ENCODE measurements at regions of chr1 and their contacts with region 1.

Region 1: DNA sequence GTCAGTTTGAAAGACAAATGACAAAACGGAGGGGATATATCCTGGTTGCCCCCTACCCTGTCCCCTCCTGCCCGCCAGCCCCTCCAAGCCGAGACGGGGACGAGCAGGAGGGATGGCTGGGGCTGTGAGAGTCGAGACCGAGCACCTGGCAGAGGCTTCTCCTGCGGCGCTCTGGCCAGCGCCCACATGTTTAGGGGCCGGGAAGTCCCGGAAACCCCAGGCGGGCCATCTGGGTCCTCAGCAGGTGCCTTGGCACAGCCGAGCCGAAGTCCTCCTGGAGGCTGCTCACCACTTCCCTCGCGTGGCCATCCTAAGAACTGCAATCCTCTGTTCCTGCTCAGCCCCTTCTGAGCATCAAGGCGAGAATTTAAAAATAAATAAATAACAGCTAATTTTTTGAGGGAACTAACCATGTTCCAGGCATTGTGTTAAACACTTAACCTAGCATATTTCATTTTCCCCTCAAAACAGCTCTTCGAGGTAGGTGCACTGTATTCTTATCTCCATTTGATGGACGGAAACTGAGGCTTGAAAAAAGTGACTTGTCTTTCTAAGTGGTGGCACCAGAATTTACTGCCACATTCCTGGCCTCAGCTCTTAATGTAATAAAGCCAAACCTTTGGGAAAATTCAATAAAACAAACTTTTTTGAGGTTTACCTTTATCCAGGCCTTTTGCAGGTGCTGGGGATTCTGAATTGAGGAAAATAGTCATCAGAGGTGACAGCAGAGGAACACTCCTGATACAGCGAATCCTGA is 3.5 kb upstream of the RIMS3 start:
- DNase-seq: peak; percentile 82
- ATAC-seq: peak; percentile 74
- H3K4me3 Mint-ChIP-seq: peak overlapping the region; percentile 75
- H3K27ac Mint-ChIP-seq: peak overlapping the region; percentile 41
- H3K4me1 Mint-ChIP-seq: peaks cover 31% of the 10 kb centered on the region
- H3K27me3 Mint-ChIP-seq: no peaks in the 10 kb centered on the region
- CTCF ChIP-seq: peak; percentile 76

Region 2: GRCh38 chr1:40161125-40161887 is 507.6 kb before region 1 on chr1 and contains the start of gene RLF:
- CTCF ChIA-PET with region 1: no interaction called
- POLR2A ChIA-PET with region 1: no interaction called
- intact Hi-C with region 1: loop called (anchors 5 kb)
- DNase-seq: peak; percentile 94
- ATAC-seq: peak; percentile 96
- H3K4me3 Mint-ChIP-seq: no peak within 1 kb of the TSS
- H3K27ac Mint-ChIP-seq: no peak within 1 kb of the TSS
- H3K4me1 Mint-ChIP-seq: peaks cover 22% of the 10 kb centered on the region
- H3K27me3 Mint-ChIP-seq: no peaks in the 10 kb centered on the region
- CTCF ChIP-seq: no peak
- total RNA-seq, gene RLF: 18.1 and 19.2 TPM in 2 replicates

Region 3: GRCh38 chr1:40612345-40612831 is 56.6 kb before region 1 on chr1:
- CTCF ChIA-PET with region 1: interaction called, 5 read pairs
- POLR2A ChIA-PET with region 1: no interaction called
- intact Hi-C with region 1: loop called (anchors 1 kb)
- DNase-seq: peak; percentile 27
- ATAC-seq: peak; percentile 96
- H3K4me3 Mint-ChIP-seq: no peak overlapping the region
- H3K27ac Mint-ChIP-seq: no peak overlapping the region
- H3K4me1 Mint-ChIP-seq: no peaks in the 10 kb centered on the region
- H3K27me3 Mint-ChIP-seq: peaks cover 2% of the 10 kb centered on the region
- CTCF ChIP-seq: peak; percentile 52

Region 4: GRCh38 chr1:40630488-40631381 is 38.2 kb before region 1 on chr1:
- CTCF ChIA-PET with region 1: interaction called, 6 read pairs
- POLR2A ChIA-PET with region 1: no interaction called
- intact Hi-C with region 1: loop called (anchors 1 kb)
- DNase-seq: no peak
- ATAC-seq: peak; percentile 62
- H3K4me3 Mint-ChIP-seq: no peak overlapping the region
- H3K27ac Mint-ChIP-seq: no peak overlapping the region
- H3K4me1 Mint-ChIP-seq: peaks cover 22% of the 10 kb centered on the region
- H3K27me3 Mint-ChIP-seq: no peaks in the 10 kb centered on the region
- CTCF ChIP-seq: no peak

Region 5: GRCh38 chr1:40849801-40850592 is 181.1 kb after region 1 on chr1:
- CTCF ChIA-PET with region 1: interaction called, 4 read pairs
- POLR2A ChIA-PET with region 1: no interaction called
- intact Hi-C with region 1: loop called (anchors 1 kb)
- DNase-seq: peak; percentile 67
- ATAC-seq: peak; percentile 97
- H3K4me3 Mint-ChIP-seq: no peak overlapping the region
- H3K27ac Mint-ChIP-seq: no peak overlapping the region
- H3K4me1 Mint-ChIP-seq: peaks cover 10% of the 10 kb centered on the region
- H3K27me3 Mint-ChIP-seq: no peaks in the 10 kb centered on the region
- CTCF ChIP-seq: peak; percentile 46

Region 6: GRCh38 chr1:41030872-41031616 is 362.1 kb after region 1 on chr1:
- CTCF ChIA-PET with region 1: no interaction called
- POLR2A ChIA-PET with region 1: no interaction called
- intact Hi-C with region 1: no loop called
- DNase-seq: no peak
- ATAC-seq: no peak
- H3K4me3 Mint-ChIP-seq: no peak overlapping the region
- H3K27ac Mint-ChIP-seq: no peak overlapping the region
- H3K4me1 Mint-ChIP-seq: peaks cover 12% of the 10 kb centered on the region
- H3K27me3 Mint-ChIP-seq: no peaks in the 10 kb centered on the region
- CTCF ChIP-seq: no peak

Region 7: DNA sequence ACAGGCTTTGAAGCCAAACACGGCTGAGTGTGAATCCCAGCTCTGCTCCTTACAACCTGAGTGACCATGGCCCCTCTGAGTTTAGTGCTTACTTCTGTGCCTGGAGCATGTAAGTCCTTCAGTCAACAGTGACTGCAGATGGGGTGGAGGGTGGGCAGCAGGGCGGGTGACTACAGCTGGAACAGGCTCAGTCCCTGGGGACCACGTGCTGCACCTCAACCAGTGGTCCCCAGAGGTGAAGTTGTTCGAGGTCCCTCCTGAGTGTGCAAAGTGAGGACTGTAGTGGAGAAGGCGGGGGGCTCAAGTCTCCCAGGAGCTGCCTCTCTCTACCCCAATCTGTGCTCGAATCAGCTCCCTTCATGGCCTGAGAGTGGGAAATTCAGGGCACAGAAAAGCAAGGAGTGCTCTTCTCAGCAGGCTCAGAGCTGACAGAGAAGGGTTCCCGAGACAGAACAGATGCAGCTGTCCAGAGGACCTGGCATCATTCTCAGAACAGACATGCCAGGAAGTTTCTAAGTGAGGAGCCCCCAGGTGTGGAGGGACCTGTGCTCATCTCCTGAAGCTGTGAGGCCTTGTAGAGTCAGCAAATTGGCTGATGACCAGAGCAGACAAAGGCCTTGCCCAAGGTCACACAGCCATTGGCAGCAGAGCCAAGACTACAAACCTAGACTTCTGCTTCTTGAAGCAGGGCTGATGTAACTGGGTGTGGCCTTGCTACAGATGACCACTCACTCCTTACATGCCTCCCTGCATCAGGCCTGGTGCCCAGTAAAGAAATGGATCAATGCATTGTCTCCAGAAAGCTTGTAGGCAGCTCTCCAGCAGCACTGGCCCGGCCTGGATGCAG is 877.3 kb after region 1 on chr1:
- CTCF ChIA-PET with region 1: no interaction called
- POLR2A ChIA-PET with region 1: no interaction called
- intact Hi-C with region 1: no loop called
- DNase-seq: no peak
- ATAC-seq: no peak
- H3K4me3 Mint-ChIP-seq: no peak overlapping the region
- H3K27ac Mint-ChIP-seq: no peak overlapping the region
- H3K4me1 Mint-ChIP-seq: peaks cover 40% of the 10 kb centered on the region
- H3K27me3 Mint-ChIP-seq: no peaks in the 10 kb centered on the region
- CTCF ChIP-seq: no peak

Measured in activated B cell treated with CpG ODN at 0.5 μM for 24 hours (primary cell).